Activated CD4-positive, alpha-beta memory T cell treated with anti-CD3 and anti-CD28 coated beads for 36 hours (primary cell): ENCODE measurements at regions of chr1 and their contacts with region 1.

Region 1: GRCh38 chr1:154558575-154559465 is at the start of gene UBE2Q1:
- DNase-seq: peak; percentile 100
- H3K4me3 Mint-ChIP-seq: peak within 1 kb of the TSS; percentile 90
- H3K27ac Mint-ChIP-seq: peak within 1 kb of the TSS; percentile 94
- H3K4me1 Mint-ChIP-seq: peaks cover 26% of the 10 kb centered on the region
- H3K27me3 Mint-ChIP-seq: no peaks in the 10 kb centered on the region
- total RNA-seq, gene UBE2Q1: 82.5 to 86.2 TPM

Region 2: GRCh38 chr1:154479764-154480421 is 78.9 kb before region 1 on chr1:
- CTCF ChIA-PET with region 1: interaction called, 22 read pairs
- POLR2A ChIA-PET with region 1: no interaction called
- intact Hi-C with region 1: no loop called
- DNase-seq: peak; percentile 71
- H3K4me3 Mint-ChIP-seq: no peak overlapping the region
- H3K27ac Mint-ChIP-seq: peak overlapping the region; percentile 11
- H3K4me1 Mint-ChIP-seq: peaks cover 27% of the 10 kb centered on the region
- H3K27me3 Mint-ChIP-seq: no peaks in the 10 kb centered on the region

Region 3: GRCh38 chr1:154607609-154608396 is 49.0 kb after region 1 on chr1 and contains the start of gene ADAR:
- CTCF ChIA-PET with region 1: interaction called, 16 read pairs
- POLR2A ChIA-PET with region 1: interaction called, 3 read pairs
- intact Hi-C with region 1: loop called (anchors 1 kb)
- DNase-seq: peak; percentile 96
- H3K4me3 Mint-ChIP-seq: peak within 1 kb of the TSS; percentile 90
- H3K27ac Mint-ChIP-seq: peak within 1 kb of the TSS; percentile 98
- H3K4me1 Mint-ChIP-seq: peaks cover 71% of the 10 kb centered on the region
- H3K27me3 Mint-ChIP-seq: no peaks in the 10 kb centered on the region
- total RNA-seq, gene ADAR: 270 to 289 TPM

Region 4: GRCh38 chr1:154669464-154670282 is 110.9 kb after region 1 on chr1:
- CTCF ChIA-PET with region 1: interaction called, 31 read pairs
- POLR2A ChIA-PET with region 1: no interaction called
- intact Hi-C with region 1: loop called (anchors 1 kb)
- DNase-seq: peak; percentile 86
- H3K4me3 Mint-ChIP-seq: no peak overlapping the region
- H3K27ac Mint-ChIP-seq: peak overlapping the region; percentile 24
- H3K4me1 Mint-ChIP-seq: no peaks in the 10 kb centered on the region
- H3K27me3 Mint-ChIP-seq: no peaks in the 10 kb centered on the region

Region 5: DNA sequence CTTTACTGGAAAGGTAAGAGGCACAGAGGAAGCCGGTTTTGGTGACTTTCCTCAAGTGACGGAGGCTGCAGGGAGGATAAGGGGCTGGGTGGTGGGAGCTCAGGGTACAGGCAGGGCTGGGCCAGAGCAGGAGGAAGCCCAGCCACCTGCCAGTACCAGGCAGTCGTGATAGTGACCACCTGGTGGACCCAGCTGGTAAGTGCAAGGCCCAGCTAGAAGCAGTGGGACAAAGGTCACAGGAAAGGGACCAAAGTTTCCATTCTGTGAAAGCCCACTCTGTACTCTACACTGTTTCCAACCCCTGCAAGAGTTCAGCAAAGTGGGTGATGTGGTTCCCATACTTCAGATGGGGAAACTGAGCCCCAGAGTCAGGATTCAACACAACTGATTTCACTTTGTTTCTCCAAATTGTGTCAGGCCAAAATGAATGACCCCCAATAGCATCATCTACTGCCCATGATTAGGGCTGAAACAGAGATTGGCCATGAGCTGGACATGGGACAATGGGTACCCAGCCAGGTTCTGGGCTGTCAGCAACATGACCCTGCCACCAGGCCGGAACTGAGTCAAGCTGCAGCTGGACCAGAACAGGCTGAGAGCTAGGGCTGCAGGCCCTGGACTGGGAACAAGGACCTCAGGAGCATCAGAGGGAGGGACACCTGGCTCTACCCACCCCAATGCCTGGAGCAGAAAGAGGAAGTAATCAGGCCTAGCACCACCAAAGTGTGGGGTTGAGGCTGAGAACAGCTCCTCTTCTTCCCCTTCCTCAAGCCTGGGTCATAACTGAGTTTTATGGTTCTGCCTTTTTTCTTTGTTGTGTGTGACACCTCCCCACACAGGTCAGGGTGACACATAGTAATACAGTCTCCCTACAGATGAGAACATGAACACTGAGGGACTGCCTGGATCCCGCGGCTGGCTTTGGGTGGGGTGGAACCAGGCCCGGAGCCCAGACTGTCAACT is 261.1 kb after region 1 on chr1:
- CTCF ChIA-PET with region 1: interaction called, 11 read pairs
- POLR2A ChIA-PET with region 1: no interaction called
- intact Hi-C with region 1: no loop called
- DNase-seq: peak; percentile 26
- H3K4me3 Mint-ChIP-seq: no peak overlapping the region
- H3K27ac Mint-ChIP-seq: no peak overlapping the region
- H3K4me1 Mint-ChIP-seq: no peaks in the 10 kb centered on the region
- H3K27me3 Mint-ChIP-seq: no peaks in the 10 kb centered on the region

Region 6: DNA sequence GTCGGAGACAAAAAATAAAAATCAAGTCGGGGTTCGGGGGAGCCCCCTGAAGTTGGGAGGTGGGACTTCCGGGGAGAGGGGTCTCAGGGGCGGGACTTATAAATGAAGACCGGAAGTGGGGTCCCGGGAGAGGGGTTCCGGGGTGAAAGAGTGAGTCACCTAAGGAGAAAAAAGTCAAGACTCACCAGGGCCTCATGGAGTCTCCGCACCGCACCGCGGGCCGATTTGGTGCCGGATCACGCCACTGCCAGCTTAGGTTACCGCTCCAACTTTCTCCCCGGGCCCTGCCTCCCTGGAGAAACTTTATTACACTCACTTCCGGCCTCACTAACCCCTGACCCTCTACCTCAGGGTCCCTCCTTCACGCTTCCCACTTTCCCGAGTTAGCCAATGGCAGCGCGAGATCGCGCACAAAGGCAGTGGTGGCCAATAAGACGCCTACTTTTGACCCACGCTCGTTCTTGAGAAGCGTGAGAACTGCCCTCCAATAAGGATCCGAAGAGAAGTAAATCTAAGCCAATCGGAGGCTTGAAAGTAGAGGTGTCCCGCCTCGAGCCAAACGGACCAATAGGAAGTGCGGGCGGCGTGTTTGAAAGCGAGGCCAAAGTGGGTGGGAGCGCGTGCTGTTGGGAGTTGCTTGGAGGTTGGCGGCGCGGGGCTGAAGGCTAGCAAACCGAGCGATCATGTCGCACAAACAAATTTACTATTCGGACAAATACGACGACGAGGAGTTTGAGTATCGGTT is 415.4 kb after region 1 on chr1 and contains the start of gene CKS1B:
- CTCF ChIA-PET with region 1: no interaction called
- POLR2A ChIA-PET with region 1: interaction called, 3 read pairs
- intact Hi-C with region 1: loop called (anchors 1 kb)
- DNase-seq: peak; percentile 98
- H3K4me3 Mint-ChIP-seq: no peak within 1 kb of the TSS
- H3K27ac Mint-ChIP-seq: no peak within 1 kb of the TSS
- H3K4me1 Mint-ChIP-seq: peaks cover 30% of the 10 kb centered on the region
- H3K27me3 Mint-ChIP-seq: no peaks in the 10 kb centered on the region
- total RNA-seq, gene CKS1B: 197 to 205 TPM